GM10248 (cell line): ENCODE measurements at regions of chr5 and their contacts with region 1.

Region 1: DNA sequence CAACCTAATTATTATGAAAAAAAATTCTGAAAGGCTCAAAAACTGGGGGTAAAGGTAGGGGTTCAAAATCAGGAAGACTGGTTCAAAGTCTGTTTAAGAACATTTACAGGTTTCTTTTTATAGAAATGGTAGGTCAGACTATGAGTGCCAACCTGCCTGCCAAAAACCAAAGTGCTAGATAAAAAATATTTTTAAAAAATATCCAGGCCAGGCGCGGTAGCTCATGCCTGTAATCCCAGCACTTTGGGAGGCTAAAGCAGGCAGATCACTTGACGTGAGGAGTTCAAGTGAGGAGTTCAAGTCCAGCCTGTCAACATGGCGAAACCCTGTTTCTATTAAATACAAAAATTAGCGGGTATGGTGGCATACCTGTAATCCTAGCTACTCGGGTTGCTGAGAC is 67.0 kb downstream of the NR3C1 start:
- DNase-seq: no peak
- CTCF ChIP-seq: no peak

Region 2: DNA sequence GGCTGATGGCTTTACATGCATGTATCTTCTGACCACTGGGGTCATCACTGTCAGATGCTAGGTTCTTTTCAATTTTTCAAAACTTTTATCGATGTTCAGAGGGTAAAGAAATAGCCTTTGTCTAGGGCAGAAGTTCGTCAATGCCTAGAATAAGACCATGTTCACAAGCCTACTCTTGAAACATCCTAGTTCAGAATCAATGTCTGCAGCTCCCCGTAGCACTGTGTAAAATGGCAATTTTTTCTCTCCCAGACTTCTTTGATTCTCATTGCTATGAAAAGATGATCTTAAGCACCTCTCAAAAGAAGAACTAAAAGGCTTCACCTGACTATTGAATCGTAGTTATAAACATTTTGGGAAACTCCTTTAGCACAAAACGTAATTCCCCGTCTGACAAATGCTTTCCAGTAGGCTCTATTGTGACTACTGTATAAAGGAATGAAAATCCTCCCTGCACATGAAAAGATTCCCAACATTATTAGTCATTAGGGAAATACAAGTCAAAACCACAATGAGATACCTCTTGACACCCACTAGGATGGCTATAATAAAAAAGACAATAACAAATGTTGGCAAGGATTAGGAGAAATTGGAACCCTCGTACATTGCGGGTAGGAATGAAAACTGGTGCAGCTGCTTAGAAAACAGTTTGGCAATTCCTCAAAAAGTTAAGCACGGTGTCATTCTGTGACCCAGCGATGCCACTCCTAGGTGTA is 302.8 kb before region 1 on chr5:
- CTCF ChIA-PET with region 1: no interaction called
- POLR2A ChIA-PET with region 1: no interaction called
- DNase-seq: no peak
- CTCF ChIP-seq: no peak

Region 3: GRCh38 chr5:143319437-143320227 is 16.9 kb before region 1 on chr5:
- CTCF ChIA-PET with region 1: interaction called, 11 read pairs
- POLR2A ChIA-PET with region 1: no interaction called
- DNase-seq: no peak
- CTCF ChIP-seq: no peak